ENCODE measurements at regions of chr1 and their contacts with region 1.

Region 1: GRCh38 chr1:2429780-2430591 is 17.6 kb upstream of the PEX10 start:
- DNase-seq: no peak
- H3K4me3 ChIP-seq: no peak overlapping the region
- H3K27ac ChIP-seq: no peak overlapping the region
- H3K4me1 ChIP-seq: peaks cover 0 to 10% of the 10 kb centered on the region in 2 donors
- H3K27me3 ChIP-seq: no peaks in the 10 kb centered on the region
- CTCF ChIP-seq: no peak
- POLR2A ChIP-seq: no peak

Region 2: DNA sequence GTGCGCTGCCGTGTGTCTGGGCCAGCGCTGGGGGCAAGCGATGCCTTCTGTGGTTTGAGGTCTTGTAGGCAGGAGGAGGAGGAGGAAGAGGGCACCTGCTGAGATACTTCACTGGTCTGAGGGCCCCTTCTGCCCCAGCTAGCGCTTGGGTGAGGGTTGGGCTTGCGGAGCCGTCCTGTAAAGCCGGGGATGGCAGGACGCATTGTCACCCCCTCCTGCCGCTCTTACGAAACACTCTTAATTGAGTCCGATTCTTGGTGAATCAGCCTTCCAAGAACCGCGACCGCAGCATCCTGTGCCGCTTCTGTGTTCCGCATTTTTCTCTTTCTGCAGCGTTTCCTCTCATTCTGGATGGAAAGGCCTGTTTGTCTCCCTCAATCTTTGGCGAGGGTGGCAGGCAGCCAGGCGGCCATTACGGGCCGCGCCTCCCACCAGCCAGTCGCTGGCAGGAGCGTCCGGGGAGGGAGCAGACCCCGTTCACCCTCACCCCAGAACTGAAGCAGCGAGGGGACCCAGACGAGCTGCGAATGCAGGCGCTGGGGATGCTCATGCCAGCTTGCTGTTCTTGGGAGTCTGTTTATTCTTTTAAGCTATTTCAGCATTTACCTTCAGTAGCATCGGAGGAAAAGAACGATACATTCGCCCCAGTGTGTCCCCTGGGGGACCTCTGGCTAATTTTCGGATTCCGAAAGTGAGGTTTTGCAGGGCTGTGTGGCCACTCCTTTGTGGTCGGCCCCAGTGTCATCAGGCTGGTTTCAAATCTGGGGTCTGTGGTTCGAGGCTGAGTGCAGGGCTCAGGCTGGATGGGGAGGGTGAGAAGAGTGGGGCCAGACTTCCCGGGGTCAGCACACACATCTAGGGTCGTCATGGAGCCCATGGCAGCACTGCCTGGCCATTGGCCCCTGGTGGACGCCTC is 139.1 kb before region 1 on chr1:
- intact Hi-C with region 1: no loop called
- DNase-seq: peak; percentile 49 to 57
- H3K4me3 ChIP-seq: no peak overlapping the region
- H3K27ac ChIP-seq: peak overlapping the region; percentile 15 to 79 (median 72)
- H3K4me1 ChIP-seq: peaks cover 43 to 82% of the 10 kb centered on the region in 2 donors
- H3K27me3 ChIP-seq: no peaks in the 10 kb centered on the region
- CTCF ChIP-seq: no peak
- POLR2A ChIP-seq: no peak

Region 3: DNA sequence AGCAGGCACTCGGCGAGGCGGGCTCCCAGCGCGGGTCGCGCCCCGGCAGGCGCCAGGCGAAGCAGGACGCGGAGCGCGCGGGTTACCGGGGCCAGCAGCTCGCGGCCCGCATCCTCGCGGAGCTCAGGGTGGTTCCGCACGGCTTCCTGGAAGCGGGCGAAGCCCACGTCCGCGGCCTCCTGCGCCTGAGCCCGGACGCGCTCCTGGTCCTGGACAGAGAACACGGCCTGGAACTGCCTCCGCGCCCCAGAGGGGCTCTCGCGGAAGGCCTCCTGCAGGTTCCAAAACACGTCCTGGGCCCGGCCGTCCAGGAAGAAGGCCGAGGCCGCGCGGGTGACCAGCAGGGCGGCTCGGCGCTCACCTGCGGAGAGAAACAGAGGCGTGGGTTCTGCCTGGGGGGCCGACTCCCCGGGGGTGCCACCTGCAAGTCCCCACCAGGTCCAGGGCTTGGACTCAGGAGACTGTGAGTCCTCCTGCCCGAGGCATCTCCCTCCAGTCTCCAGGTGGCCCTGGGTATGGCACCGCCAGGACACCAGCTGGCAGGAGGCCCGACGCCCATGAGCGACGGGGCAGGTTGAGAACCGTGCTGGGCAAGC is 360.1 kb after region 1 on chr1:
- intact Hi-C with region 1: loop called (anchors 10 kb)
- DNase-seq: no peak
- H3K4me3 ChIP-seq: no peak overlapping the region
- H3K27ac ChIP-seq: no peak overlapping the region
- H3K4me1 ChIP-seq: no peaks in the 10 kb centered on the region
- H3K27me3 ChIP-seq: no peaks in the 10 kb centered on the region
- CTCF ChIP-seq: no peak
- POLR2A ChIP-seq: no peak

Measured in thyroid gland (tissue), 4 donors.